H1 (cell line): ENCODE measurements at regions of chr6 and their contacts with region 1.

Region 1: DNA sequence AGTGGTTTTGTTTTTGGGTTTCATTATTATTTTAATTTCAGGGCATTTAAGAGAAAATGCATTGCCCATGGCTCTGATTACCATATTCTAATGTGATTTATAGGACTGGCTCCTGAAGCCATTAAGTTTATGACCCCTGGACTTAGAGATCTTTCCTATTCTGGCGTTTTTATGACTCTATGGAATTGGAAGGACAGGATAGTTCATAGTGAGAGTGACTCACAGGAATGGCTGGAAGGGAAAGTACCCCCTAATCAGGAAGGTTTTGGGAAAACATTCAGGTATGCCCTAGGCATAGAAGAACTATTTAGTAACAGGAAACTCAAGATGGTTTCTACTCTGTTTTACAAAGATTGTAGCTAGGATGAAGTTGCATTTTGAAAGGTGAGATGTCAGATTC is 108.6 kb upstream of the SLC2A12 start:
- DNase-seq: no peak
- H3K4me3 ChIP-seq: no peak overlapping the region
- H3K27ac ChIP-seq: no peak overlapping the region; the same call in 1 of the 2 replicates
- H3K4me1 ChIP-seq: peaks cover 0 to 3% (median 3%) of the 10 kb centered on the region in 4 experiments; a peak in 4 of 7 replicates
- H3K27me3 ChIP-seq: no peaks in the 10 kb centered on the region
- CTCF ChIP-seq: no peak
- EP300 ChIP-seq: no peak
- POLR2A ChIP-seq: no peak
- RAD21 ChIP-seq: no peak

Region 2: DNA sequence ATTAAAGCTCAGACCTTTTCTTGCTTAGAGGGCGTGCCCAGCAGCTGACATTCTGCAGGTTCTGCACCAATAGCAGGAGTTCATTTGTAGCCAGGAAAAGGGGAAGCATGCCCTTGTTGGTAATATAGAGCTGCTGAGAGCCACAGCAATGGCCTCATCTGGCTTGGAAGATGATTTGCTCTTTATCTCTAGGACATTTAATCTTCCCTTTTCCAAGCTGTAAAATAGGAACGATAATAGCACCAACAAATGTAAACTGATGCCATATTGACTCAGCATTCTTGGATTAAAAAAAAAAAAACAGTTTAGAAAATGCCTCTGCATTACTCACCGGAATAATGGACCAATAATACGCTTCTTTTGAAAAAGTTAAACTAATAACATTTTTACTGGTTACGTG is 15.2 kb before region 1 on chr6:
- CTCF ChIA-PET with region 1: interaction called, 18 read pairs
- POLR2A ChIA-PET with region 1: interaction called, 3 read pairs
- DNase-seq: no peak
- H3K4me3 ChIP-seq: no peak overlapping the region
- H3K27ac ChIP-seq: no peak overlapping the region
- H3K4me1 ChIP-seq: peaks cover 0 to 3% (median 0%) of the 10 kb centered on the region in 4 experiments; a peak in 1 of 7 replicates
- H3K27me3 ChIP-seq: no peaks in the 10 kb centered on the region
- CTCF ChIP-seq: no peak
- EP300 ChIP-seq: no peak
- POLR2A ChIP-seq: no peak
- RAD21 ChIP-seq: no peak

Region 3: DNA sequence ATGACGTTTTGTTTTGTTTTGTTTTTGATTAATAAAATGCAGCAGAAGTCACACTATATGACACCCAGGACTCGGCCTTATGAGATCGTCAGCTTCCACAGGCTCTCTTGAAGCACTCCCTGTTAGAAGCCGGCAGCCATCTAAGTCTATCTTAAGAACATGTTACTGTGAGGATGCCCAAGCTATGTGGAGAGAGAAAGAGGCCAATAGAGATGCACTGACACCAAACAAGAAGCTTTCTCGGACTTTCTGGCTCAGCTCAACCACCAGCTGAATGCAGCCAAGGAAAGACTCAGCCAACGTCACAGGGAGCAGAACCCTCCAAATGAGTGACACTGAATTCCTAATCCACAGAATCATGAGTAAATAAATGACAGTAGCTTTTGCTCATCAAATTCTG is 142.9 kb after region 1 on chr6:
- CTCF ChIA-PET with region 1: no interaction called
- POLR2A ChIA-PET with region 1: no interaction called
- DNase-seq: no peak
- H3K4me3 ChIP-seq: no peak overlapping the region
- H3K27ac ChIP-seq: no peak overlapping the region
- H3K4me1 ChIP-seq: peaks cover 0 to 2% (median 0%) of the 10 kb centered on the region in 4 experiments; a peak in 1 of 7 replicates
- H3K27me3 ChIP-seq: no peaks in the 10 kb centered on the region
- CTCF ChIP-seq: no peak
- EP300 ChIP-seq: no peak
- POLR2A ChIP-seq: no peak
- RAD21 ChIP-seq: no peak